CD8-positive, alpha-beta memory T cell (primary cell): ENCODE measurements at regions of chr1 and their contacts with region 1.

Region 1: DNA sequence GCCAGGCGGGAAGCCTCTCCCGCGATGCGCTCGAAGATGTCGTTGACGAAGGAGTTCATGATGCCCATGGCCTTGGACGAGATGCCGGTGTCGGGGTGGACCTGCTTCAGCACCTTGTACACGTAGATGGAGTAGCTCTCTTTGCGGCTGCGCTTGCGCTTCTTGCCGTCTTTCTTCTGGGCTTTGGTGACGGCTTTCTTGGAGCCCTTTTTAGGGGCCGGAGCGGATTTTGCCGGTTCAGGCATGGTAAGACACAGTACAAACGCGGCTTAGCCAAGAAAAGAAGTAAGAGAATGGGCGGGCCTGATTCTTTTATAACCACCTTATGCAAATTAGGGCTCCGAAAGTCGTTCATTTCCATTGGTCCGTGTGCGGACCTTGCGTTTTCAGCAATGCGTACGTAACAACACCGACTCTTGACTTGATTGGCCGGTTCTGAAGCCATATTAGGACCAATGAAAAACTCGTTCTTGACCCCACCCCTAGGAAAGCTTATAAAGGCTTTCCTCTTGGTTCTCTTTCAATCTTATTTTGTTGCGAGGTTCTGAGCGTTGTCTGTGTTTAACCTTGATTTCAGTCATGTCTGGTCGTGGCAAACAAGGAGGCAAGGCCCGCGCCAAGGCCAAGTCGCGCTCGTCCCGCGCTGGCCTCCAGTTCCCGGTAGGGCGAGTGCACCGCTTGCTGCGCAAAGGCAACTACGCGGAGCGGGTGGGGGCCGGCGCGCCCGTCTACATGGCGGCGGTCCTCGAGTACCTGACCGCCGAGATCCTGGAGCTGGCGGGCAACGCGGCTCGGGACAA is 12.8 kb upstream of the BOLA1 start:
- DNase-seq: peak; percentile 67 to 95 (median 93)
- H3K4me3 ChIP-seq: peak overlapping the region; percentile 76
- H3K4me3 Mint-ChIP-seq: no peak overlapping the region
- H3K27ac ChIP-seq: peak overlapping the region; percentile 94
- H3K27ac Mint-ChIP-seq: no peak overlapping the region
- H3K4me1 ChIP-seq: peaks cover 35% of the 10 kb centered on the region
- H3K4me1 Mint-ChIP-seq: peaks cover 8 to 15% (median 12%) of the 10 kb centered on the region in 3 donors
- H3K27me3 ChIP-seq: no peaks in the 10 kb centered on the region
- H3K27me3 Mint-ChIP-seq: no peaks in the 10 kb centered on the region

Region 2: GRCh38 chr1:149844101-149844500 is 42.5 kb before region 1 on chr1:
- CTCF ChIA-PET with region 1: interaction called, 9 read pairs
- POLR2A ChIA-PET with region 1: interaction called, 177 read pairs
- DNase-seq: peak in 2 of 5 donors; percentile 3 to 45
- H3K4me3 ChIP-seq: peak overlapping the region; percentile 85
- H3K4me3 Mint-ChIP-seq: peak overlapping the region; percentile 88 to 97 (median 91)
- H3K27ac ChIP-seq: peak overlapping the region; percentile 85
- H3K27ac Mint-ChIP-seq: peak overlapping the region; percentile 83 to 95 (median 88)
- H3K4me1 ChIP-seq: peaks cover 44% of the 10 kb centered on the region
- H3K4me1 Mint-ChIP-seq: peaks cover 45 to 57% (median 54%) of the 10 kb centered on the region in 3 donors
- H3K27me3 ChIP-seq: no peaks in the 10 kb centered on the region
- H3K27me3 Mint-ChIP-seq: no peaks in the 10 kb centered on the region

Region 3: DNA sequence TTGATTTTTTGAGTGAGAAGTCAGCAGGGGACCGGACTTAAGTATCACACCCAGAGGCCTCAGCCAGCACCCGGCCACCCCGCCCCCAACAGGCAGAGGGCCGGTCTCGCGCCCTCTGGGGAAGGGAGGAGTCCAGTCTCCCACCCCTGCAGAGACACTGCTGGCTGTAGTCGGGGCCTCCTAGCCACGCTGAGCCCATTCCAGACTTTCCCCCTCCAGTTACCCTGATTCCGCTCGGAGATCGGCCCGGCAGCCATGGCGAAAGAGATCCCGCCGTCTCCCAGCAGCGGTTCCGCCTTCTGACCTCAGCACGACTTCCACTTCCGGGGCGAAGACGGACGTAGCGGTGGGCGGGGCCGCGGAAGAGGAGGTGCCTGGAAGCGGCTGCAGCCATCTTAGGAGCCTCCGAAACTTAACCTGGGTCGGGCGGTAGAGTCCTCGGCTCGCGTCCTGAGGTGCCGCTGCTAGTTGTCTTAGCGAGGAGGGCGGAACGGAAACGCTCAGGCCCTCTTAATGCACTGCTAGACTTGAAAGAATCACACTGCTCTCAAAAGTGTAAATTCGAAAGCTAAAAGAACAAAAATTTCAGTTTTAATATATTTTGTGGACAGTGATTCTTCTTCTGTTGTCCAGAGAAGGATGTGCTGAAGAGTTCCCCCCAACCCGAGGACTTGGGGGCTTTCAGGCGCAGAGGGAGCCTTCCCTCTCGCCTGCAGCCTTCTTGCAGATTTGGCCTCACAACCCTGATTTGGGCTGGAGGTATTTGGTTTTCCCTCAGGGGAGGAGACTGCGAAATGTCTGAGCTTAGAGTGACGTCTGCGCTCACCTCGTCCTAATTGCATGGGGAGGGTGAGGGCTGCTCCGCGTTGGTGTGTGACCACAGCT is 41.1 kb after region 1 on chr1 and contains the start of gene SF3B4:
- CTCF ChIA-PET with region 1: interaction called, 8 read pairs
- POLR2A ChIA-PET with region 1: interaction called, 33 read pairs
- DNase-seq: peak; percentile 92 to 97 (median 93)
- H3K4me3 ChIP-seq: peak within 1 kb of the TSS; percentile 81
- H3K4me3 Mint-ChIP-seq: peak within 1 kb of the TSS; percentile 89 to 97 (median 95)
- H3K27ac ChIP-seq: peak within 1 kb of the TSS; percentile 93
- H3K27ac Mint-ChIP-seq: peak within 1 kb of the TSS; percentile 91 to 100 (median 98)
- H3K4me1 ChIP-seq: peaks cover 35% of the 10 kb centered on the region
- H3K4me1 Mint-ChIP-seq: peaks cover 40 to 54% (median 41%) of the 10 kb centered on the region in 3 donors
- H3K27me3 ChIP-seq: no peaks in the 10 kb centered on the region
- H3K27me3 Mint-ChIP-seq: peaks cover 9 to 19% of the 10 kb centered on the region in 2 donors
- total RNA-seq, gene SF3B4: 111 to 124 TPM

Region 4: GRCh38 chr1:150149271-150150132 is 262.9 kb after region 1 on chr1 and contains the start of gene PLEKHO1:
- CTCF ChIA-PET with region 1: no interaction called
- POLR2A ChIA-PET with region 1: interaction called, 13 read pairs
- DNase-seq: peak; percentile 68 to 91 (median 78)
- H3K4me3 ChIP-seq: peak within 1 kb of the TSS; percentile 80
- H3K4me3 Mint-ChIP-seq: peak within 1 kb of the TSS; percentile 90 to 99 (median 97)
- H3K27ac ChIP-seq: peak within 1 kb of the TSS; percentile 79
- H3K27ac Mint-ChIP-seq: peak within 1 kb of the TSS; percentile 89 to 99 (median 98)
- H3K4me1 ChIP-seq: peaks cover 34% of the 10 kb centered on the region
- H3K4me1 Mint-ChIP-seq: peaks cover 48 to 71% (median 71%) of the 10 kb centered on the region in 3 donors
- H3K27me3 ChIP-seq: no peaks in the 10 kb centered on the region
- H3K27me3 Mint-ChIP-seq: peaks cover 0 to 4% of the 10 kb centered on the region in 2 donors
- total RNA-seq, gene PLEKHO1: 44.9 to 47.2 TPM

Region 5: GRCh38 chr1:150235852-150236613 is 349.4 kb after region 1 on chr1 and contains the start of gene ANP32E:
- CTCF ChIA-PET with region 1: interaction called, 3 read pairs
- POLR2A ChIA-PET with region 1: interaction called, 12 read pairs
- DNase-seq: peak; percentile 87 to 98 (median 97)
- H3K4me3 ChIP-seq: peak within 1 kb of the TSS; percentile 96
- H3K4me3 Mint-ChIP-seq: peak within 1 kb of the TSS in 1 of 7 donors; percentile 93
- H3K27ac ChIP-seq: peak within 1 kb of the TSS; percentile 98
- H3K27ac Mint-ChIP-seq: peak within 1 kb of the TSS in 6 of 8 donors; percentile 95 to 99 (median 97)
- H3K4me1 ChIP-seq: peaks cover 18% of the 10 kb centered on the region
- H3K4me1 Mint-ChIP-seq: peaks cover 17 to 25% (median 17%) of the 10 kb centered on the region in 3 donors
- H3K27me3 ChIP-seq: no peaks in the 10 kb centered on the region
- H3K27me3 Mint-ChIP-seq: peaks cover 0 to 4% of the 10 kb centered on the region in 2 donors
- total RNA-seq, gene ANP32E: 154 TPM

Region 6: GRCh38 chr1:150621497-150622302 is 735.1 kb after region 1 on chr1:
- CTCF ChIA-PET with region 1: no interaction called
- POLR2A ChIA-PET with region 1: no interaction called
- DNase-seq: peak; percentile 40 to 79 (median 54)
- H3K4me3 ChIP-seq: no peak overlapping the region
- H3K4me3 Mint-ChIP-seq: peak overlapping the region in 2 of 7 donors; percentile 35 to 37
- H3K27ac ChIP-seq: no peak overlapping the region
- H3K27ac Mint-ChIP-seq: peak overlapping the region; percentile 35 to 95 (median 86)
- H3K4me1 ChIP-seq: peaks cover 30% of the 10 kb centered on the region
- H3K4me1 Mint-ChIP-seq: peaks cover 29 to 63% (median 55%) of the 10 kb centered on the region in 3 donors
- H3K27me3 ChIP-seq: no peaks in the 10 kb centered on the region
- H3K27me3 Mint-ChIP-seq: no peaks in the 10 kb centered on the region